ENCODE measurements at regions of chr13 and their contacts with region 1.

Region 1: GRCh38 chr13:111219280-111219679 is 101.2 kb upstream of the TEX29 start:
- DNase-seq: no peak
- ATAC-seq: no peak
- H3K4me3 ChIP-seq: no peak overlapping the region
- H3K27ac ChIP-seq: no peak overlapping the region
- H3K4me1 ChIP-seq: peaks cover 0 to 9% of the 10 kb centered on the region in 2 experiments; a peak in 2 of 5 replicates
- H3K27me3 ChIP-seq: no peaks in the 10 kb centered on the region
- CTCF ChIP-seq: no peak
- EP300 ChIP-seq: no peak
- POLR2A ChIP-seq: no peak
- RAD21 ChIP-seq: no peak

Region 2: DNA sequence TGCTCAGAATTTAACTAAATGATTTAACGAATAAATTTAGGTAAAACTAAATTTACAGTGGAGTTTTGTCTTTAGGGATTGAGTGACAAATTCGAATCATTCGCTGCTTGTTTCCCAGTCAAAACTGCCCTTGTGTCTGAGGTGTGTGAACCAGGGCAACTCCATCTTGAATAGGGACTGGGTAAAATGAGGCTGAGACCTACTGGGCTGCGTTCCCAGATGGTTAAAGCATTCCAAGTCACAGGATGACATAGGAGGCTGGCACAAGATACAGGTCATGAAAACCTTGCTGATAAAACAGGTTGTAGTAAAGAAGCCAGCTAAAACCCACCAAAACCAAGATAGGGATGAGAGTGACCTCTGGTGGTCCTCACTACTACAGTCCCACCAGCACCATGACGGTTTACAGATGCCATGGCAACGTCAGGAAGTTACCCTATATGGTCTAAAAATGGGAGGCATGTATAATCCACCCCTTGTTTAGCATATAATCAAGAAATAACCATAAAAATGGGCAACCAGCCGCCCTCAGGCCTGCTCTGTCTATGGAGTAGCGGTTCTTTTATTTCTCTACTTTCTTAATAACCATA is 294.2 kb before region 1 on chr13:
- CTCF ChIA-PET with region 1: no interaction called
- POLR2A ChIA-PET with region 1: no interaction called
- in situ Hi-C with region 1: no loop called
- intact Hi-C with region 1: no loop called
- DNase-seq: peak in 1 of 4 experiments; percentile 49
- ATAC-seq: 0 out of 3 replicates have a peak, but pooled peaks have one; percentile 29
- H3K4me3 ChIP-seq: no peak overlapping the region
- H3K27ac ChIP-seq: no peak overlapping the region
- H3K4me1 ChIP-seq: peaks cover 3% of the 10 kb centered on the region in 2 experiments; a peak in 3 of 5 replicates
- H3K27me3 ChIP-seq: no peaks in the 10 kb centered on the region
- CTCF ChIP-seq: peak; percentile 29 to 49 (median 40); a peak in 4 of 6 replicates
- EP300 ChIP-seq: no peak
- POLR2A ChIP-seq: no peak
- RAD21 ChIP-seq: peak in 1 of 2 experiments; percentile 59; a peak in 2 of 4 replicates

Region 3: DNA sequence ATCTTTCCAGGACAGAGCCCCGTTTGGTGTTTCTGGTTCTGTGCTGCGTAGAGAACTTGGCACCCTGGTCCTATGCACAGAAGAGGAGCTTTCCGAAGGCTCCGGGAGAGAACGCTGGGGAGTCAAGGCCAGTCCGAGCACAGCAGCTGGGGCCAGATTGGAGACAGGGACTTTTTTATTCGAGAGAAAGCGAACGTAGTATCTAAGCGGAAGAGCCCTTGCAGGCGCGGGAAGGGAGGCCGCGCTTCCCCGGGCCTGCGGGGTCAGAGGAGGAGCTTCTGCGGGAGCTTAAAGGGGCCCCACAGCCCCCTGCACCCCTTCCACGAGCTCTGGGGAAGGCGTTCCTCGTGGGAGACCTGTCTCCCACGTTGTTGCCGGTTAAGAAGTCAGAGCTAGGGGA is 152.7 kb before region 1 on chr13:
- CTCF ChIA-PET with region 1: no interaction called
- POLR2A ChIA-PET with region 1: no interaction called
- in situ Hi-C with region 1: no loop called
- intact Hi-C with region 1: loop called (anchors 2 kb)
- DNase-seq: no peak
- ATAC-seq: no peak
- H3K4me3 ChIP-seq: no peak overlapping the region
- H3K27ac ChIP-seq: no peak overlapping the region
- H3K4me1 ChIP-seq: peaks cover 0 to 6% of the 10 kb centered on the region in 2 experiments; a peak in 2 of 5 replicates
- H3K27me3 ChIP-seq: no peaks in the 10 kb centered on the region; a peak in 3 of 5 replicates
- CTCF ChIP-seq: no peak
- EP300 ChIP-seq: no peak
- POLR2A ChIP-seq: no peak
- RAD21 ChIP-seq: no peak

Region 4: GRCh38 chr13:111153279-111153976 is 65.9 kb before region 1 on chr13:
- CTCF ChIA-PET with region 1: no interaction called
- POLR2A ChIA-PET with region 1: interaction called, 5 read pairs
- in situ Hi-C with region 1: no loop called
- intact Hi-C with region 1: loop called (anchors 5 kb)
- DNase-seq: peak; percentile 86 to 90 (median 88)
- ATAC-seq: peak; percentile 92
- H3K4me3 ChIP-seq: peak overlapping the region; percentile 93
- H3K27ac ChIP-seq: peak overlapping the region; percentile 91
- H3K4me1 ChIP-seq: peaks cover 4 to 12% of the 10 kb centered on the region in 2 experiments; a peak in 3 of 5 replicates
- H3K27me3 ChIP-seq: no peaks in the 10 kb centered on the region; a peak in 2 of 5 replicates
- CTCF ChIP-seq: peak; percentile 21 to 54 (median 25); a peak in 3 of 6 replicates
- EP300 ChIP-seq: no peak; the same call in 1 of the 2 replicates
- POLR2A ChIP-seq: peak; percentile 87
- RAD21 ChIP-seq: no peak

Region 5: GRCh38 chr13:111610081-111610480 is 390.8 kb after region 1 on chr13:
- CTCF ChIA-PET with region 1: no interaction called
- POLR2A ChIA-PET with region 1: no interaction called
- in situ Hi-C with region 1: no loop called
- intact Hi-C with region 1: no loop called
- DNase-seq: no peak
- ATAC-seq: no peak
- H3K4me3 ChIP-seq: no peak overlapping the region
- H3K27ac ChIP-seq: no peak overlapping the region
- H3K4me1 ChIP-seq: no peaks in the 10 kb centered on the region
- H3K27me3 ChIP-seq: peaks cover 0 to 7% of the 10 kb centered on the region in 2 experiments; a peak in 3 of 5 replicates
- CTCF ChIP-seq: no peak
- EP300 ChIP-seq: no peak
- POLR2A ChIP-seq: no peak
- RAD21 ChIP-seq: no peak

Measured in K562 (cell line).